ENCODE measurements at regions of chr6 and their contacts with region 1.

Region 1: DNA sequence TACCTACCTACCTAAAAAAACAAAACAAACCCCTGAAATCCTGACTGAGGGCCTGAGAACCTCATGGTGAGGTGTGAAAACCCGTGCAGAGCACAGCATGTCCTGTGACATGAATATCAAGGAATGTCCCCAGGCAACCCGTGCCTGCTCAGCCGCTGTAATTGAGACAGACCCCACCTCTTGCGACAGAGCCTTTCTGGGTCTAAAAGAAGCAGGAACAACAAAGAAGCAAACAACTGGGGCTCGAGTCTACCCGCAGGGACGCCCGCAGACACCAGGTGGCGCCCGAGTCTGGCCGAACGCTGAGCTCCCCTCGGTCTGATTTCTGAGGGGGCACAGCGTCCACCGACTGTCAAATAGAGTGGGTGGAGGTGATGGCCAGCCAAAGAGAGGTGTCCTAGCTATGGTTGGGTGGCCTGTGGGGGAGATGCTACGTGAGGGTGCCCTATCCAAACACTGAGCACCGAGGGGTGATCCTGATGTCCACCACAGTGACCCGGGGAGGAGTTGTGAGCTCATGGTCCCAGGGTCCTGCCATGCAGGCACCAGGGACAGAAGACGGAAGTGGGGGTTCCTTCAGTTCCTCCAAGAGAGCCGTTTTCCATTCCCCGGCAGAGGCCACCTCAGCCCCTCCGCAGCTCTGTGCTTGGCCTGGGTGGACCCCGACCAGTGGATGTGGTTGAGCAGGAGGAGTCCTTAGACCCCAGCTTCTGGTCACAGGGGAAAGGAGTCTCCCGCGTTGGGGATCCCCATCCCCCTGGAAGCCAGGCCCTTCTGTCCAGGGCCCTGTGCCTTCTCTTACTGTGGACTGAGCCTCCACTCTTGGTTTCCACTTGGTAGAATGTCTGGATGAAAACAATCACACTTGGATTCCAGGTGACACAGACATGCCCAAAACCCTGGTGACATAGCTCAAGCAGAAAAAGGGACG is 268.2 kb downstream of the CDC5L start:
- DNase-seq: peak; percentile 66
- ATAC-seq: peak; percentile 51
- H3K4me3 ChIP-seq: no peak overlapping the region
- H3K4me3 Mint-ChIP-seq: no peak overlapping the region
- H3K27ac ChIP-seq: no peak overlapping the region
- H3K27ac Mint-ChIP-seq: no peak overlapping the region
- H3K4me1 ChIP-seq: no peaks in the 10 kb centered on the region
- H3K4me1 Mint-ChIP-seq: peaks cover 5% of the 10 kb centered on the region
- H3K27me3 ChIP-seq: peaks cover 0 to 13% (median 6%) of the 10 kb centered on the region in 4 experiments
- H3K27me3 Mint-ChIP-seq: peaks cover 39% of the 10 kb centered on the region
- CTCF ChIP-seq: peak; percentile 94

Region 2: DNA sequence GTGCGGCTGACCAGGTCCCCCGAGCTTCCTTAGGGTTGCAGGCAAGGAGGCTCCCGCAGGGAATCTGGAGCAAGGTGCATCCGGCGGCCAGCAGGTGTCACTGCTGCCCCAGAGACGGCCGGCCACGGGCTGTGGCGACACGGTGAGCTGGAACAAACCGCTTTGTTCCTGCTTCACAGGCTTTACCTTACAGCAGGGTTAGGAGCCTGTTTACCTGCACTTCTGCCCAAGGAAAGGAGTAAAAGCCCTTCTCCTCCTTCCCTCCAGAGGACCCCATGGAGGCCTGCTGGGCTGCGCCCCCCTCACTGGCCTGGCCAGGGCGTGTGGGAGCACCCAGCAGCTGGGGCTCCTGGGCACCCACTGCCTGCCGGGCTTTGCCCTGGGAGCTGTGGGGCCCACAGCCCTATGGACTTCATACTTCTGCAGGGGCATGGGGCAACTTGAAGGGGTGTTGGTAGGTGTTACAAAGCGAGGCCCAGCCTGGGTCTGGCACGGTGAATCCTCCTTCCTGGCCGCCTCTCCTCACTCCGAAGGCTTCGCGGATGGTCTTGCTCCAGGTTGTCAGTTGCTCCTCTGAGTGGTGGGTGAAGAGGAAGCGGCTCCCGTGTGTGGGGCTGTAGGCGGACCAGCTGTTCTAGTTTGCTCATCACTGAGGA is 179.8 kb before region 1 on chr6:
- CTCF ChIA-PET with region 1: interaction called, 10 read pairs
- POLR2A ChIA-PET with region 1: no interaction called
- intact Hi-C with region 1: no loop called
- DNase-seq: peak; percentile 63
- ATAC-seq: peak; percentile 39
- H3K4me3 ChIP-seq: no peak overlapping the region
- H3K4me3 Mint-ChIP-seq: no peak overlapping the region
- H3K27ac ChIP-seq: no peak overlapping the region
- H3K27ac Mint-ChIP-seq: no peak overlapping the region
- H3K4me1 ChIP-seq: peaks cover 0 to 6% of the 10 kb centered on the region in 2 donors
- H3K4me1 Mint-ChIP-seq: no peaks in the 10 kb centered on the region
- H3K27me3 ChIP-seq: peaks cover 0 to 9% (median 1%) of the 10 kb centered on the region in 4 experiments
- H3K27me3 Mint-ChIP-seq: peaks cover 15% of the 10 kb centered on the region
- CTCF ChIP-seq: peak; percentile 72

Region 3: GRCh38 chr6:45714741-45715507 is 1059.2 kb after region 1 on chr6:
- CTCF ChIA-PET with region 1: interaction called, 89 read pairs
- POLR2A ChIA-PET with region 1: no interaction called
- intact Hi-C with region 1: no loop called
- DNase-seq: peak; percentile 75
- ATAC-seq: peak; percentile 65
- H3K4me3 ChIP-seq: no peak overlapping the region
- H3K4me3 Mint-ChIP-seq: no peak overlapping the region
- H3K27ac ChIP-seq: no peak overlapping the region
- H3K27ac Mint-ChIP-seq: no peak overlapping the region
- H3K4me1 ChIP-seq: peaks cover 6 to 20% of the 10 kb centered on the region in 2 donors
- H3K4me1 Mint-ChIP-seq: peaks cover 22% of the 10 kb centered on the region
- H3K27me3 ChIP-seq: no peaks in the 10 kb centered on the region
- H3K27me3 Mint-ChIP-seq: no peaks in the 10 kb centered on the region
- CTCF ChIP-seq: peak; percentile 73

Region 4: GRCh38 chr6:45916692-45917091 is 1261.0 kb after region 1 on chr6:
- CTCF ChIA-PET with region 1: interaction called, 334 read pairs
- POLR2A ChIA-PET with region 1: no interaction called
- intact Hi-C with region 1: no loop called
- DNase-seq: no peak
- ATAC-seq: no peak
- H3K4me3 ChIP-seq: no peak overlapping the region
- H3K4me3 Mint-ChIP-seq: no peak overlapping the region
- H3K27ac ChIP-seq: no peak overlapping the region
- H3K27ac Mint-ChIP-seq: no peak overlapping the region
- H3K4me1 ChIP-seq: no peaks in the 10 kb centered on the region
- H3K4me1 Mint-ChIP-seq: no peaks in the 10 kb centered on the region
- H3K27me3 ChIP-seq: no peaks in the 10 kb centered on the region
- H3K27me3 Mint-ChIP-seq: no peaks in the 10 kb centered on the region
- CTCF ChIP-seq: no peak

Region 5: GRCh38 chr6:45930420-45931040 is 1274.9 kb after region 1 on chr6:
- CTCF ChIA-PET with region 1: interaction called, 334 read pairs
- POLR2A ChIA-PET with region 1: no interaction called
- intact Hi-C with region 1: no loop called
- DNase-seq: peak; percentile 63
- ATAC-seq: no peak
- H3K4me3 ChIP-seq: no peak overlapping the region
- H3K4me3 Mint-ChIP-seq: no peak overlapping the region
- H3K27ac ChIP-seq: no peak overlapping the region
- H3K27ac Mint-ChIP-seq: no peak overlapping the region
- H3K4me1 ChIP-seq: no peaks in the 10 kb centered on the region
- H3K4me1 Mint-ChIP-seq: no peaks in the 10 kb centered on the region
- H3K27me3 ChIP-seq: no peaks in the 10 kb centered on the region
- H3K27me3 Mint-ChIP-seq: peaks cover 4% of the 10 kb centered on the region
- CTCF ChIP-seq: peak; percentile 99